Lower lobe of right lung (tissue), 2 donors: ENCODE measurements at regions of chr4 and their contacts with region 1.

Region 1: DNA sequence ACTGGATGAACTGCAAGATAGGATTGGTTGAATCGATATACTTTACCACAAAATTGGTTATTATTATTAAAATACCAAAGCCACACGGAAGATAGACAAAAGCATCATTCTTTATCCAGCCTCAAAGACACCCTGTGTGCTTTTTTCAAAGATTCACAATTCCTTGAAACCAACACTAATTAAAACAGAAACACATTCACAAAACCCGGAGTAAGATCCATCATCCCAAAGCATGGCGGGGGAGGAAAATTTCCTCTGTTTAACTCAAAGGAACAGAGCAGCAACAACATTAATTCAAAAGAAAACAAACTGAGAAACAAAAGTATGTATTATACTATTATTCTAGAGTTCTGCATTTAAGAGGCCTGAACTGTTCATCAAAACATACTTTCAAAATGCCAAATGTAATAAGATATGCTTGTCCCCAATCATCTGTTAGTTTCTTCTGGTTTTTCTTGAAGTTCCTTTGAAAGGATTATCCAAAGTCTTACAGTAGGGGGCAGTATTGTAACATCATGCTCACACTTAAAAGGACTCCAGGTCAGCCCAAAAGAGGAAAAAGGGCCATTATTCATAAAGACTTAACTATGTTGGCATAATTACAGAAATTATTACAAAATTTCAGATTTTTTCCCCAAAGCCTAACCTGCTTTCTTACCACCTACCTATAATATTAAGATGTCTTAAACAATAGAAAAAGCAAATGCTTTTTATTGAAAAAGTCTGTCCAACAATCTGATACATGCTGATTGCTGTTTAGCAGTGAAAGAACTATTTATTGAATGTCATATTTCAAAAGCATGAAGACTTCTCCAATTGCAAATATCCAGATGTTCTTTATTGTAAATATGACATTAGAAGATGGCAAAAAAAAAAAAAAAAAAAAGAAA is 168.7 kb downstream of the SCFD2 start:
- DNase-seq: no peak
- ATAC-seq: peak in 1 of 2 donors; percentile 67
- H3K4me3 ChIP-seq: no peak overlapping the region
- H3K27ac ChIP-seq: no peak overlapping the region
- H3K4me1 ChIP-seq: no peaks in the 10 kb centered on the region
- H3K27me3 ChIP-seq: no peaks in the 10 kb centered on the region
- CTCF ChIP-seq: peak; percentile 74

Region 2: DNA sequence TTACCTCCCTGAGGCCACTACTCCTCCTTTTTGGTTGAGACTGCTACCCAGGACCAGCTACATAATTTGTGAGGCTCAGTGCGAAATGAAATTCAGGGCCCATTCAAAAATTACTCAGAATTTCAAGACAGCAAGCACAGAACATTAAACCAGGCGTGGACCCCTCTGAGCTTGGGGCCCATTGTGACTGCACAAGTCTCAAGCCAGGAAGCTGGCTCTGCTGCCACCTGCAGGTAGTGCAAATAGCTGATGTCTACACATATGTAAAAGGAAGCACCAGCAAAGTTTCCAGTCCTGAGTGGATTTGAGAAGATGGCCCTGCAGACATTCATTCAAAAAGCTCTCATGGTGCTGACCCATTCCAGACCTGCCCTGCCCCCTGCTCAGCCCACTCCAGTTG is 607.6 kb after region 1 on chr4:
- intact Hi-C with region 1: loop called (anchors 10 kb)
- DNase-seq: peak; percentile 65
- ATAC-seq: peak; percentile 61 to 68
- H3K4me3 ChIP-seq: no peak overlapping the region
- H3K27ac ChIP-seq: no peak overlapping the region
- H3K4me1 ChIP-seq: no peaks in the 10 kb centered on the region
- H3K27me3 ChIP-seq: no peaks in the 10 kb centered on the region
- CTCF ChIP-seq: peak; percentile 55